Left ventricle myocardium inferior (tissue), 1 donor: ENCODE measurements at regions of chr4 and their contacts with region 1.

Region 1: GRCh38 chr4:73311428-73311827 is 52.8 kb upstream of the ANKRD17 start:
- DNase-seq: no peak
- H3K4me3 ChIP-seq: no peak overlapping the region
- H3K27ac ChIP-seq: no peak overlapping the region
- H3K4me1 ChIP-seq: no peaks in the 10 kb centered on the region
- H3K27me3 ChIP-seq: no peaks in the 10 kb centered on the region
- CTCF ChIP-seq: peak; percentile 51

Region 2: DNA sequence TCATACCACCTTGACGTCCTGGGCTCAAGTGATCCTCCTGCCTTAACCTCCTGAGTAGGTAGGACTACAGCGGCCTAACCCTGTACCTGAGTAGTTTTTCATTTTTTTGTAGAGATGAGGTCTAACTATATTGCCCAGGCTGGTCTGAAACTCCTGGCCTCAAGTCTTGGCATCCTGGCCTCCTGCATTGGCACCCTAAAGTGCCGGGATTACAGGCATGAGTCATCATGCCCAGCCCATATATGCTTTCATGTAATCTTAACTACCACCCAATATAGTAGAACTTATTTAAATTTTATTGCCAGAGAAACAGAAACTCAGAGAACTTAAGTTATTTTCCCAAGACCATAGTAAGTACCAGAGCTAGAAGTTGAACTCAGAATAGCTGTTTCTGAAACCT is 197.2 kb after region 1 on chr4:
- intact Hi-C with region 1: no loop called
- DNase-seq: no peak
- H3K4me3 ChIP-seq: no peak overlapping the region
- H3K27ac ChIP-seq: no peak overlapping the region
- H3K4me1 ChIP-seq: no peaks in the 10 kb centered on the region
- H3K27me3 ChIP-seq: no peaks in the 10 kb centered on the region
- CTCF ChIP-seq: no peak

Region 3: GRCh38 chr4:73653695-73654106 is 342.3 kb after region 1 on chr4:
- intact Hi-C with region 1: loop called (anchors 10 kb)
- DNase-seq: no peak
- H3K4me3 ChIP-seq: no peak overlapping the region
- H3K27ac ChIP-seq: no peak overlapping the region
- H3K4me1 ChIP-seq: no peaks in the 10 kb centered on the region
- H3K27me3 ChIP-seq: peaks cover 5% of the 10 kb centered on the region
- CTCF ChIP-seq: peak; percentile 66